ENCODE measurements at regions of chr6 and their contacts with region 1.

Region 1: GRCh38 chr6:134938896-134939295 is 11.0 kb downstream of the ALDH8A1 start:
- DNase-seq: no peak
- H3K4me3 ChIP-seq: no peak overlapping the region
- H3K27ac ChIP-seq: no peak overlapping the region
- H3K4me1 ChIP-seq: peaks cover 0 to 3% (median 0%) of the 10 kb centered on the region in 4 experiments; a peak in 1 of 7 replicates
- H3K27me3 ChIP-seq: no peaks in the 10 kb centered on the region
- CTCF ChIP-seq: no peak
- EP300 ChIP-seq: no peak
- POLR2A ChIP-seq: no peak
- RAD21 ChIP-seq: no peak

Region 2: GRCh38 chr6:134111062-134111677 is 827.7 kb before region 1 on chr6:
- CTCF ChIA-PET with region 1: interaction called, 35 read pairs
- POLR2A ChIA-PET with region 1: no interaction called
- DNase-seq: no peak
- H3K4me3 ChIP-seq: no peak overlapping the region
- H3K27ac ChIP-seq: no peak overlapping the region
- H3K4me1 ChIP-seq: no peaks in the 10 kb centered on the region
- H3K27me3 ChIP-seq: no peaks in the 10 kb centered on the region
- CTCF ChIP-seq: peak; percentile 59 to 100 (median 96)
- EP300 ChIP-seq: no peak
- POLR2A ChIP-seq: no peak
- RAD21 ChIP-seq: peak; percentile 60 to 69

Region 3: DNA sequence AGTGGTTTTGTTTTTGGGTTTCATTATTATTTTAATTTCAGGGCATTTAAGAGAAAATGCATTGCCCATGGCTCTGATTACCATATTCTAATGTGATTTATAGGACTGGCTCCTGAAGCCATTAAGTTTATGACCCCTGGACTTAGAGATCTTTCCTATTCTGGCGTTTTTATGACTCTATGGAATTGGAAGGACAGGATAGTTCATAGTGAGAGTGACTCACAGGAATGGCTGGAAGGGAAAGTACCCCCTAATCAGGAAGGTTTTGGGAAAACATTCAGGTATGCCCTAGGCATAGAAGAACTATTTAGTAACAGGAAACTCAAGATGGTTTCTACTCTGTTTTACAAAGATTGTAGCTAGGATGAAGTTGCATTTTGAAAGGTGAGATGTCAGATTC is 777.9 kb before region 1 on chr6:
- CTCF ChIA-PET with region 1: interaction called, 22 read pairs
- POLR2A ChIA-PET with region 1: no interaction called
- DNase-seq: no peak
- H3K4me3 ChIP-seq: no peak overlapping the region
- H3K27ac ChIP-seq: no peak overlapping the region; the same call in 1 of the 2 replicates
- H3K4me1 ChIP-seq: peaks cover 0 to 3% (median 3%) of the 10 kb centered on the region in 4 experiments; a peak in 4 of 7 replicates
- H3K27me3 ChIP-seq: no peaks in the 10 kb centered on the region
- CTCF ChIP-seq: no peak
- EP300 ChIP-seq: no peak
- POLR2A ChIP-seq: no peak
- RAD21 ChIP-seq: no peak

Region 4: DNA sequence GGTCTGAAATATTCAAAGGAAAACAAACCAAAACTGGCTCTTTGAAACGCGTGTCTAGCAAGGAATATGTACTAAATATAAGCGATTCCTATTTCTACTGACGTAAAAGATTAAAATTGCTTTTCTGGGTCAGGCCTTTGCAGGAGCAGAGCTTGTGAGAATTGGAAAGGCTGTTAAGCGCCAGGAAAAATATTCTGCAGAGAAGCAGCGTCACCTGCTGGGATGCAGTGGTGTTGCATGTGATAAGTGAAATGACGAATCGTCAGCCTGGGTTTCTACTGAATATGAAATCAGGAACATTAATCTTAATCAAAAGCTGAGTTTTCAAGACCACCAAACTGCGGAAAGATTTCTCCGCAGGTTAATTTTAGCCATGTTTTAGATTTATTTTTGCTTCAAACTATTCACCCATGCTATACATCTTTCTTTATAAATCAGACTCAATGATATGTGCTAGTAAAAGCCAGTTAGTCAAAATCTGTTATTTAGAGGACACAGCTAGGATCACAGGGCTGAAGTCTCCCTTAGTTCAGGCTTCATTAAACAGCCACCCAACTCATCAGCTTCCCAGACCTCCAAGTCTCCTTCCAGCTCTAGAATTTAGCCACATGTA is 56.4 kb before region 1 on chr6:
- CTCF ChIA-PET with region 1: interaction called, 23 read pairs
- POLR2A ChIA-PET with region 1: no interaction called
- DNase-seq: peak; percentile 29 to 72
- H3K4me3 ChIP-seq: no peak overlapping the region
- H3K27ac ChIP-seq: no peak overlapping the region
- H3K4me1 ChIP-seq: no peaks in the 10 kb centered on the region
- H3K27me3 ChIP-seq: no peaks in the 10 kb centered on the region
- CTCF ChIP-seq: peak; percentile 72 to 89 (median 85)
- EP300 ChIP-seq: no peak
- POLR2A ChIP-seq: no peak
- RAD21 ChIP-seq: peak; percentile 96 to 97

Region 5: DNA sequence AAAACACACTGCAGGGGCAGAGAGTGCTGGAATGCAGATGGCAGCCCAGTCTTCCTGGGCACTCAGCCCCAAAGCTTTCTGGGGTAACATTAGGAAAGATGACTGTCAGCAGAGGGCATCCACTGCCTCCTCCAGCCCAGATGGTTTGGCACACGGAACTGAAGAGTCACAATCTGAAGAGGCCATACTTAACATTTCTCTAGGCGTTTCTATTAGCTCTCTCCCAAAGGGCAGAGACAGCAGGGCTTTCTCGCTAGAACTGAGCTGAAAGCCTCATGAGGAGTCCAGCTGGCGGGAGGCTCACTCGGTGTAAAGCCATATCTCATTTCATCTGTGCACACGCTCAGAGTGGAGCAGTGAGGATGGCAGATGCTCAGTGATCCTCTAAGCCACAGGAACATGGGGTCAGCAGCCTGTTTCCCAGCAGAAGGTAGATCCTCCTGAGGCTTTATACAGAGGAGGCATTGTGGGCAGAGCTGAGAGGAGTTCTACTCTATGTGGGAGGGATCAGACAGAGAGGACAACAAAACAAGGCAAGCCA is 17.1 kb before region 1 on chr6:
- CTCF ChIA-PET with region 1: interaction called, 28 read pairs
- POLR2A ChIA-PET with region 1: no interaction called
- DNase-seq: no peak
- H3K4me3 ChIP-seq: no peak overlapping the region
- H3K27ac ChIP-seq: no peak overlapping the region
- H3K4me1 ChIP-seq: no peaks in the 10 kb centered on the region; a peak in 1 of 7 replicates
- H3K27me3 ChIP-seq: no peaks in the 10 kb centered on the region
- CTCF ChIP-seq: no peak
- EP300 ChIP-seq: no peak
- POLR2A ChIP-seq: no peak
- RAD21 ChIP-seq: no peak

Region 6: GRCh38 chr6:134950482-134950881 is 11.6 kb after region 1 on chr6:
- CTCF ChIA-PET with region 1: interaction called, 35 read pairs
- POLR2A ChIA-PET with region 1: no interaction called
- DNase-seq: no peak
- H3K4me3 ChIP-seq: no peak overlapping the region
- H3K27ac ChIP-seq: no peak overlapping the region
- H3K4me1 ChIP-seq: no peaks in the 10 kb centered on the region
- H3K27me3 ChIP-seq: no peaks in the 10 kb centered on the region
- CTCF ChIP-seq: no peak
- EP300 ChIP-seq: no peak
- POLR2A ChIP-seq: no peak
- RAD21 ChIP-seq: peak in 1 of 2 experiments; percentile 31; a peak in 2 of 4 replicates